ENCODE measurements at regions of chr6 and their contacts with region 1.

Region 1: GRCh38 chr6:32971581-32972352 is 3.4 kb downstream of the BRD2 start:
- DNase-seq: peak; percentile 99 to 100 (median 100)
- ATAC-seq: peak; percentile 57
- H3K4me3 ChIP-seq: peak overlapping the region; percentile 78 to 98
- H3K4me3 Mint-ChIP-seq: peak overlapping the region; percentile 93
- H3K27ac ChIP-seq: peak overlapping the region; percentile 86 to 97
- H3K27ac Mint-ChIP-seq: peak overlapping the region; percentile 99
- H3K4me1 ChIP-seq: peaks cover 33% of the 10 kb centered on the region
- H3K4me1 Mint-ChIP-seq: peaks cover 47% of the 10 kb centered on the region
- H3K27me3 ChIP-seq: no peaks in the 10 kb centered on the region
- H3K27me3 Mint-ChIP-seq: no peaks in the 10 kb centered on the region
- CTCF ChIP-seq: no peak

Region 2: GRCh38 chr6:31068669-31069340 is 1903.0 kb before region 1 on chr6:
- CTCF ChIA-PET with region 1: no interaction called
- POLR2A ChIA-PET with region 1: no interaction called
- intact Hi-C with region 1: no loop called
- DNase-seq: peak; percentile 37 to 82 (median 67)
- ATAC-seq: peak; percentile 75
- H3K4me3 ChIP-seq: no peak overlapping the region
- H3K4me3 Mint-ChIP-seq: no peak overlapping the region
- H3K27ac ChIP-seq: no peak overlapping the region
- H3K27ac Mint-ChIP-seq: no peak overlapping the region
- H3K4me1 ChIP-seq: no peaks in the 10 kb centered on the region
- H3K4me1 Mint-ChIP-seq: no peaks in the 10 kb centered on the region
- H3K27me3 ChIP-seq: no peaks in the 10 kb centered on the region
- H3K27me3 Mint-ChIP-seq: peaks cover 2% of the 10 kb centered on the region
- CTCF ChIP-seq: peak; percentile 76

Region 3: DNA sequence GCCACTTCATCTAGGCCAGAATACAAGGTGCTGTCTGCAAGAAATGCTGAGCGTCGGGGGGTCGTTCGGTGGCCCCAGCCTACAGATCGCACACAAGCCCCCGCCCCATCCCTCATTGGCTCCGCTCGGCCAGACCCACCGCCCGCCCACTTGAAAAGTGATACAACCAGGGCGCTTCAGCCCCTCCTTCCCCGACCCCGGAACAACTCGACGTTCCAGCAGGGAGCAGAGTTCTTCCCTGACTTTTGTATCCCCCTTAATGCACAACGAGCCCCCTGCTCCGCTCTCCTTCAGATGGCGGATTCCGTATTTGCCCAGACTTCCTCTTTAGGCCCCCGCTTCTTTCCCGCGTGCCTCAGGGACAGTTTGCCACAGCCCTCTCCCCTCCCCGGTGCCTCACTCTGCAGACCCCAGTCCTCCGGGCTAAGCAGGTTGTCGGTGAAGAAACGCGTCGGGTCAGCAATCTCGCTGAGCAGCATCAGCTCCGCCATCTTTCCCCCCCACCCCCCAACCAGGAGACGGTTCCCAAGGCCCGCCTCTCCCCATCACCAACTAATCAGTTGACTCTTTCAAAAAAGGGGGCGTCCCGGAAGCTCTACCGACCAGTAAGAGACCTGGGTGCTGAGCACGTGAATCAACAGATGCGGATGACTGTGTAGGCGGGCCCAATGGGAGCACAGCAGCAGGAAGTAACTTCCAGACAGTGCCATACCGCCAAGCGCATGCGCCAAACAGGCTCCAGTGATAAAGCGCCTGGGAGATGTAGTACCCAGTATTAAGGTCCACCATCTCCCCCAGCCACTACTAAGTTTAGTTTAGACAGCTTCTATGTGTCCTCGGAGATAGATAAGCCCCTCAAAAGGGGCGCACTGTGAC is 843.8 kb before region 1 on chr6 and contains the start of gene ATF6B:
- CTCF ChIA-PET with region 1: no interaction called
- POLR2A ChIA-PET with region 1: no interaction called
- intact Hi-C with region 1: loop called in 1 of 2 experiments (anchors 5 kb)
- DNase-seq: peak; percentile 90 to 100 (median 95)
- ATAC-seq: peak; percentile 94
- H3K4me3 ChIP-seq: peak within 1 kb of the TSS; percentile 81 to 88
- H3K4me3 Mint-ChIP-seq: peak within 1 kb of the TSS; percentile 99
- H3K27ac ChIP-seq: peak within 1 kb of the TSS; percentile 76 to 83
- H3K27ac Mint-ChIP-seq: peak within 1 kb of the TSS; percentile 97
- H3K4me1 ChIP-seq: peaks cover 31% of the 10 kb centered on the region
- H3K4me1 Mint-ChIP-seq: peaks cover 47% of the 10 kb centered on the region
- H3K27me3 ChIP-seq: no peaks in the 10 kb centered on the region
- H3K27me3 Mint-ChIP-seq: no peaks in the 10 kb centered on the region
- CTCF ChIP-seq: no peak
- total RNA-seq, gene ATF6B: 69.3 to 72.5 TPM

Region 4: DNA sequence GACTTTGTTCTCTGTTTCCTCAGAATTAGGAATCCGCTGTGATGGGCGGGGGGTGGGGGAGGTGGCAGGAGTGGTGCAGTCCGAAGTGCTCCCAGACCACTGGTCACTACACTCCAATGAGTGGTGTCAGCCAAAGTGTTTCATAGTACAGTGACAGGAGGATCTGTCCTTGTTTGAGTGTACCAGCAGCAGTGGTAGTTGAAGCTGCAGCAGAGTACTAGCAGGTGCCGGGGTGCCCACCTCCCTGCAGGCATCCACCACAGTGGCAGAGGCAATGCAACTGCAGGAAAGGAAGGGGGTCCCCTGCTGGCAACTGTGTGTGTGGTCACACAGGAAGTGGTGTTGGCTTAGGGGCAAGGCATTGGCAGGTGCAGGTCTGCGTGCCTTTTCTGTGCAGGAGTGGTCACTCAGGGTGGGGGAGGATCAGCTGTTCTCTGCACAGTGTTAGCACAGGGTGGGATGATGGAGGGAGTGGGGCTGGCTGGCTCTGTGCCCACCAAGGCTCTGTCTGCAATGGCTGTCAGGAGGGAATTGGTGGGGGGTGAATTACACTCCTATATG is 164.7 kb before region 1 on chr6:
- CTCF ChIA-PET with region 1: no interaction called
- POLR2A ChIA-PET with region 1: no interaction called
- intact Hi-C with region 1: no loop called
- DNase-seq: no peak
- ATAC-seq: no peak
- H3K4me3 ChIP-seq: no peak overlapping the region
- H3K4me3 Mint-ChIP-seq: no peak overlapping the region
- H3K27ac ChIP-seq: no peak overlapping the region
- H3K27ac Mint-ChIP-seq: no peak overlapping the region
- H3K4me1 ChIP-seq: no peaks in the 10 kb centered on the region
- H3K4me1 Mint-ChIP-seq: peaks cover 21% of the 10 kb centered on the region
- H3K27me3 ChIP-seq: no peaks in the 10 kb centered on the region
- H3K27me3 Mint-ChIP-seq: peaks cover 24% of the 10 kb centered on the region
- CTCF ChIP-seq: no peak

Region 5: DNA sequence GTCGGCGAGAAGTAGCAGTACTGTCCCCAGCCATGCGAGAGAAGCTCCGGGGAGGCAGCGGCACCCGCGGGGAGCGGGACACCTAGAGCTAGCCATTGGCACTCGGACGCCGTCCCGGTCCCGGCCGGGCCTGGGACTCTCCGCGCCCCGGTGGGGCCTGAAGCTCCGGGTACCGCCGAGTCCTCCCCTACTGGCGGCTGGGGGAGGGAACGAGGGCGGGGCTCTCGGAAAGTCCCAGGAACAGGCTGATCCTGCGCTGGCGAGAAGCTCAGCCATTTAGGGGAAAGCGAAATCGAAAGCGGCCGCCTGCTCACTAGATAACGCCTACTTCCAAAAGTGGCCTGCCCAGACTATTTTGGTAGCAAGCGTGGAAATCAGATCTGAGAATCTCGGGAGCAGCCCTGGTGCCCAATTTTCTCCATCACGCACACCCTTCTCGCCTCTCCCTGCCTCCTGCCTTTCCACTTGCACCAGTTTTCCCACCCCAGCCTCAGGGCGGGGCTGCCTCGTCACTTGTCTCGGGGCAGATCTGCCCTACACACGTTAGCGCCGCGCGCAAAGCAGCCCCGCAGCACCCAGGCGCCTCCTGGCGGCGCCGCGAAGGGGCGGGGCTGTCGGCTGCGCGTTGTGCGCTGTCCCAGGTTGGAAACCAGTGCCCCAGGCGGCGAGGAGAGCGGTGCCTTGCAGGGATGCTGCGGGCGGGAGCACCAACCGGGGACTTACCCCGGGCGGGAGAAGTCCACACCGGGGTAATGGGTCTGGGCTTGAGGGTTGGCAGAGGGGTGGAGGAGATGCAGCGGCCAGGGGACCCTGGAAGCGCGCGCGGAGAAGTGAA is 118.0 kb before region 1 on chr6 and contains the starts of genes PSMB9 and TAP1:
- CTCF ChIA-PET with region 1: interaction called, 6 read pairs
- POLR2A ChIA-PET with region 1: interaction called, 78 read pairs
- intact Hi-C with region 1: loop called in 1 of 2 experiments (anchors 1 kb)
- DNase-seq: peak; percentile 83 to 99 (median 94)
- ATAC-seq: peak; percentile 78
- H3K4me3 ChIP-seq: peak within 1 kb of the TSS; percentile 85 to 99
- H3K4me3 Mint-ChIP-seq: peak within 1 kb of the TSS; percentile 99
- H3K27ac ChIP-seq: peak within 1 kb of the TSS; percentile 98
- H3K27ac Mint-ChIP-seq: peak within 1 kb of the TSS; percentile 100
- H3K4me1 ChIP-seq: peaks cover 62% of the 10 kb centered on the region
- H3K4me1 Mint-ChIP-seq: peaks cover 69% of the 10 kb centered on the region
- H3K27me3 ChIP-seq: no peaks in the 10 kb centered on the region
- H3K27me3 Mint-ChIP-seq: no peaks in the 10 kb centered on the region
- CTCF ChIP-seq: peak; percentile 89
- total RNA-seq, gene PSMB9: 32.9 to 34.7 TPM
- total RNA-seq, gene TAP1: 98.0 to 98.1 TPM

Region 6: GRCh38 chr6:32933636-32934085 is 38.1 kb before region 1 on chr6:
- CTCF ChIA-PET with region 1: interaction called, 72 read pairs
- POLR2A ChIA-PET with region 1: interaction called, 222 read pairs
- intact Hi-C with region 1: loop called in 1 of 2 experiments (anchors 1 kb)
- DNase-seq: peak; percentile 50 to 87 (median 81)
- ATAC-seq: peak; percentile 61
- H3K4me3 ChIP-seq: no peak overlapping the region
- H3K4me3 Mint-ChIP-seq: no peak overlapping the region
- H3K27ac ChIP-seq: no peak overlapping the region
- H3K27ac Mint-ChIP-seq: no peak overlapping the region
- H3K4me1 ChIP-seq: no peaks in the 10 kb centered on the region
- H3K4me1 Mint-ChIP-seq: peaks cover 5% of the 10 kb centered on the region
- H3K27me3 ChIP-seq: no peaks in the 10 kb centered on the region
- H3K27me3 Mint-ChIP-seq: no peaks in the 10 kb centered on the region
- CTCF ChIP-seq: peak; percentile 72

Region 7: GRCh38 chr6:33014841-33015634 is 43.3 kb after region 1 on chr6:
- CTCF ChIA-PET with region 1: no interaction called
- POLR2A ChIA-PET with region 1: interaction called, 10 read pairs
- intact Hi-C with region 1: no loop called
- DNase-seq: peak in 7 of 9 experiments; percentile 43 to 89 (median 56)
- ATAC-seq: peak; percentile 74
- H3K4me3 ChIP-seq: no peak overlapping the region
- H3K4me3 Mint-ChIP-seq: no peak overlapping the region
- H3K27ac ChIP-seq: no peak overlapping the region
- H3K27ac Mint-ChIP-seq: no peak overlapping the region
- H3K4me1 ChIP-seq: peaks cover 23% of the 10 kb centered on the region
- H3K4me1 Mint-ChIP-seq: peaks cover 35% of the 10 kb centered on the region
- H3K27me3 ChIP-seq: no peaks in the 10 kb centered on the region
- H3K27me3 Mint-ChIP-seq: no peaks in the 10 kb centered on the region
- CTCF ChIP-seq: peak; percentile 87

Region 8: DNA sequence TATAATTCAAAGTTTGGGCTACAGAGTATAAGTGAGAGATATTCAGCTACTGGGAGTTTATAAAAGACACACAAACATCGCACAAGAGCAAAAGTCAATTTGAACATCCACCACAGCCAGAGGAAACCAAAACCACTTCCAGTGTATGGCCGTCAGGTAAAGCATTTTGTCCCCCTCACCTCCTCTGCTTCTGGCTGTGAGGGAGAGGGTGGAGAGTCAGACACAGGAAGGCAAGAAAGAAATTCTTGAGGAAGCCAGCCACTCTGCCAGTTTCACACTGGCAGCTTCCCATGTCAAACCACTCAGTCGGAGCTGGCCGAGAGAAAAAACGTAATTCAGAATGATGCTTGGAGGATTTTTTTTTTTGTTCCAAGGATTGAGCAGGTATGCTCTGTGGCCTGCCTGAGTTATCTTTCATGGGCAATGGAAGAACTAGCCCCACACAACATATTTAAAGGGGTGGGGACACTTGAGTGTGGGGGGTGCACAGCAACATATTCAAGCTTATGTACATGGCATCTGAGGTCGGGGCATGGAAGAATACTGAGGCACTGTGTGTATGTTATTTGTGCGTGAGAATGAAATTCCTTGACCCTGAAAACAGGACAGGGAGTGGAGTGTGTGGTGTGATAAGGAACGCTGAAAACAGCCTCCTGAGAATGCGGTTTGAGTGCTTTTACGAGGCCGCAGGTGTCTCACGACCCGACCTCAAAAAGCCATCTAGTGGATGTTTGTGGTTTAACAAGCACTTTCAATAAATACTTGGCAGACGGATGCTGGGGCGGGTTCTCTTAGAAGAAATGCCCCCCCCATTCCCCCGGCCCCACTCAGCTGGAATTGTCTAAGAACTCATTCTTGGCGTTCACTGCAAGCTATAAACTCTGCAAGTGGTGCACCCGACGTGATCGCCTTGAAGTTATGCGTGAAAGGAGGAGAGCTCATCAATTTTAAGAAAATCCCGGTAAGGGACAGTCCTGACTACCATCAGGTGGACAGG is 373.2 kb after region 1 on chr6:
- CTCF ChIA-PET with region 1: interaction called, 3 read pairs
- POLR2A ChIA-PET with region 1: interaction called, 11 read pairs
- intact Hi-C with region 1: no loop called
- DNase-seq: peak; percentile 33 to 94 (median 70)
- ATAC-seq: peak; percentile 58
- H3K4me3 ChIP-seq: peak overlapping the region; percentile 40 to 53
- H3K4me3 Mint-ChIP-seq: peak overlapping the region; percentile 82
- H3K27ac ChIP-seq: peak overlapping the region; percentile 75 to 95
- H3K27ac Mint-ChIP-seq: peak overlapping the region; percentile 94
- H3K4me1 ChIP-seq: peaks cover 32% of the 10 kb centered on the region
- H3K4me1 Mint-ChIP-seq: peaks cover 42% of the 10 kb centered on the region
- H3K27me3 ChIP-seq: no peaks in the 10 kb centered on the region
- H3K27me3 Mint-ChIP-seq: no peaks in the 10 kb centered on the region
- CTCF ChIP-seq: peak; percentile 72

Region 9: DNA sequence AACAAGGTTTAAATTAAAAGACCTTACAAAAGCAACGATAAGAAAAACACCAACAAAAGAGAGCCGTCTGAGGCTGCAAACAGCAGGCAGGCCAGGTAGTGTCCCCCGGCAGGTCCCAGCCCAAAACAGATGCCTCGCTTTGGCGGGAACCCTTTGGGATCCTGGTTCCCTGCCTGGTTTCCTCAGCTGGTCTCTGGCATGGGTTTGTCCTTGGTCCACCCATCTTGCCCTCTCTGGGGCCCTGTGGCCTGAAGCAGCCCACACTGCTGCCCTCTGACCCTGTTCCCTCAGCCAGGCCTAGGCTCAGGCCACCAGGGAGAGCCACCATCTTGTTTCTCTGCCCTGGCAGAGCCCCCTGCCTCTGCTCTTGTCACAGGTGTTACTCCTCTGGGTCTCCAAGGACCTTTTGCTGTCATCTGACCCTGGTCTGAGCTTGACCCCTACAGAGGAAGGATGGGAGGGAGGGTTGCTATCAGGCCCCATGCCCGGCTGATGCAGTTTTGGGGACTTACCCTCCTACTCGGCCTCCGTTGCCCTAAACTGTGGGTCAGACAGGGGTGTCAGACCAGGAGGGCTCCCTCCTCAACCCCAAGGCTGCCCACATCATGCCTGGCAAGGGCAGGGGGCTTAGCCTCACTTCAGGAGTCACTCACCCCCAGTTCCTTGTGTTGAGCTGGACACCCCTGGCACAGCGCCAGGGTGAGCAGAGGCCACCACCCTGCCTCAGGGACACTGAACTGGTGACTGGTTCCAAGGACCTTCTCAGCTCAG is 1204.7 kb after region 1 on chr6:
- CTCF ChIA-PET with region 1: no interaction called
- POLR2A ChIA-PET with region 1: no interaction called
- intact Hi-C with region 1: no loop called
- DNase-seq: no peak
- ATAC-seq: no peak
- H3K4me3 ChIP-seq: no peak overlapping the region
- H3K4me3 Mint-ChIP-seq: no peak overlapping the region
- H3K27ac ChIP-seq: no peak overlapping the region
- H3K27ac Mint-ChIP-seq: no peak overlapping the region
- H3K4me1 ChIP-seq: no peaks in the 10 kb centered on the region
- H3K4me1 Mint-ChIP-seq: peaks cover 26% of the 10 kb centered on the region
- H3K27me3 ChIP-seq: peaks cover 0 to 2% of the 10 kb centered on the region in 2 experiments
- H3K27me3 Mint-ChIP-seq: no peaks in the 10 kb centered on the region
- CTCF ChIP-seq: no peak